ENCODE measurements at regions of chr6 and their contacts with region 1.

Region 1: GRCh38 chr6:100228831-100229641 is 235.0 kb upstream of the MCHR2 start:
- DNase-seq: peak; percentile 37
- ATAC-seq: peak; percentile 99
- H3K4me3 ChIP-seq: peak overlapping the region; percentile 69; the same call in 1 of the 2 replicates
- H3K27ac ChIP-seq: peak overlapping the region; percentile 20; the same call in 1 of the 2 replicates
- H3K4me1 ChIP-seq: no peaks in the 10 kb centered on the region
- H3K27me3 ChIP-seq: no peaks in the 10 kb centered on the region
- CTCF ChIP-seq: peak in 2 of 3 experiments; percentile 21 to 28; a peak in 1 of 6 replicates
- EP300 ChIP-seq: no peak
- POLR2A ChIP-seq: peak; percentile 60; the same call in 1 of the 2 replicates
- RAD21 ChIP-seq: no peak

Region 2: DNA sequence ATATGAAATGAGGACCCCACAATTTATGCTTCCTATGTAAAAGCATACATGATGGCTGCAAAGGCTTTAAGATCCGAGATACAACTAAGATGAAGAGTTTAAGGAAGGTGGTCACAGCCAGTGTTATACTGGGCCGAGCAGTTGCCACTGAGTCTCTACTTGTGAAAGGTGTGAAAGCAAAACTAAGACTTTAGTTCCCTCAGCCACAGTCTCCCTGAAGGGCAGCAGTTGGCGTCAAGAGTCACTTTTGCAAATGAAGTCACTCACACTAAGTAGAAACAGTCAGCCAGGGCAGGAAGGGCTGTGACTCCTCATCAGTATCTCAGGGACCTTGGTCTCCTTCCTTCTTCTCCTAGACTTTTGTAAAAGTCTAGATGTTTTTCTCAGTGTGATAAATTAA is 43.4 kb before region 1 on chr6:
- CTCF ChIA-PET with region 1: no interaction called
- POLR2A ChIA-PET with region 1: no interaction called
- RAD21 ChIA-PET with region 1: no interaction called
- SMC1A ChIA-PET with region 1: interaction called, 10 read pairs
- in situ Hi-C with region 1: no loop called
- intact Hi-C with region 1: no loop called
- DNase-seq: no peak
- ATAC-seq: peak; percentile 88
- H3K4me3 ChIP-seq: no peak overlapping the region
- H3K27ac ChIP-seq: no peak overlapping the region
- H3K4me1 ChIP-seq: 0 out of 2 replicates have a peak, but pooled peaks cover 2% of the 10 kb centered on the region
- H3K27me3 ChIP-seq: no peaks in the 10 kb centered on the region; a peak in 1 of 4 replicates
- CTCF ChIP-seq: no peak
- EP300 ChIP-seq: no peak; a peak in 1 of 4 replicates
- POLR2A ChIP-seq: no peak
- RAD21 ChIP-seq: no peak

Region 3: DNA sequence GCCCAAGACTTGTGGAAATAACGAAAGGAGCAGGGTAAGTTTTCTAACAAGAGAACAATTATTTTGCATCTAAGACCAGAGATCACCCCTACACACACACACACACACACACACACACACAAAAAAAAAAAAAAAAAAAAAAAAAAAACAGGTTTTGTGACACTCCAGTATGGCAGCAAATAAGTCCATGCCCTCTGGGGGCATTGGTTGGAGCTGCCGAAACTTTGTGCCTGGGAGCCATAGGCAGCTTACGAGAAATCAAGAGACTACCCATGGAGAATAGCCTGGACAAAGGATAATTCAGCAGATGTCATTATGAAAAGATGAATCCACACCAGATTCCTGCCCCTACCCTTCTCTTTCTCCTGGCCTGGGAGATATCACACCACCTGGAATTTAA is 14.5 kb after region 1 on chr6:
- CTCF ChIA-PET with region 1: interaction called, 3 read pairs
- POLR2A ChIA-PET with region 1: interaction called, 3 read pairs
- RAD21 ChIA-PET with region 1: no interaction called
- SMC1A ChIA-PET with region 1: interaction called, 12 read pairs
- in situ Hi-C with region 1: no loop called
- intact Hi-C with region 1: no loop called
- DNase-seq: no peak
- ATAC-seq: no peak
- H3K4me3 ChIP-seq: no peak overlapping the region
- H3K27ac ChIP-seq: no peak overlapping the region
- H3K4me1 ChIP-seq: no peaks in the 10 kb centered on the region
- H3K27me3 ChIP-seq: no peaks in the 10 kb centered on the region; a peak in 1 of 4 replicates
- CTCF ChIP-seq: no peak
- EP300 ChIP-seq: no peak
- POLR2A ChIP-seq: no peak
- RAD21 ChIP-seq: no peak

Measured in GM12878 (cell line).